ENCODE measurements at regions of chr16 and their contacts with region 1.

Region 1: GRCh38 chr16:11045846-11046245 is 101.5 kb downstream of the CLEC16A start:
- DNase-seq: no peak
- ATAC-seq: peak in 1 of 8 donors; percentile 37
- H3K4me3 ChIP-seq: no peak overlapping the region
- H3K27ac ChIP-seq: peak overlapping the region in 2 of 10 donors; percentile 46 to 48
- H3K4me1 ChIP-seq: peaks cover 0 to 11% (median 0%) of the 10 kb centered on the region in 9 donors
- H3K27me3 ChIP-seq: no peaks in the 10 kb centered on the region
- CTCF ChIP-seq: no peak

Region 2: GRCh38 chr16:11072420-11073153 is 26.7 kb after region 1 on chr16:
- intact Hi-C with region 1: loop called in 1 of 10 experiments (anchors 2 kb)
- DNase-seq: no peak
- ATAC-seq: no peak
- H3K4me3 ChIP-seq: no peak overlapping the region
- H3K27ac ChIP-seq: no peak overlapping the region
- H3K4me1 ChIP-seq: peaks cover 0 to 2% (median 0%) of the 10 kb centered on the region in 9 donors
- H3K27me3 ChIP-seq: no peaks in the 10 kb centered on the region
- CTCF ChIP-seq: no peak

Region 3: DNA sequence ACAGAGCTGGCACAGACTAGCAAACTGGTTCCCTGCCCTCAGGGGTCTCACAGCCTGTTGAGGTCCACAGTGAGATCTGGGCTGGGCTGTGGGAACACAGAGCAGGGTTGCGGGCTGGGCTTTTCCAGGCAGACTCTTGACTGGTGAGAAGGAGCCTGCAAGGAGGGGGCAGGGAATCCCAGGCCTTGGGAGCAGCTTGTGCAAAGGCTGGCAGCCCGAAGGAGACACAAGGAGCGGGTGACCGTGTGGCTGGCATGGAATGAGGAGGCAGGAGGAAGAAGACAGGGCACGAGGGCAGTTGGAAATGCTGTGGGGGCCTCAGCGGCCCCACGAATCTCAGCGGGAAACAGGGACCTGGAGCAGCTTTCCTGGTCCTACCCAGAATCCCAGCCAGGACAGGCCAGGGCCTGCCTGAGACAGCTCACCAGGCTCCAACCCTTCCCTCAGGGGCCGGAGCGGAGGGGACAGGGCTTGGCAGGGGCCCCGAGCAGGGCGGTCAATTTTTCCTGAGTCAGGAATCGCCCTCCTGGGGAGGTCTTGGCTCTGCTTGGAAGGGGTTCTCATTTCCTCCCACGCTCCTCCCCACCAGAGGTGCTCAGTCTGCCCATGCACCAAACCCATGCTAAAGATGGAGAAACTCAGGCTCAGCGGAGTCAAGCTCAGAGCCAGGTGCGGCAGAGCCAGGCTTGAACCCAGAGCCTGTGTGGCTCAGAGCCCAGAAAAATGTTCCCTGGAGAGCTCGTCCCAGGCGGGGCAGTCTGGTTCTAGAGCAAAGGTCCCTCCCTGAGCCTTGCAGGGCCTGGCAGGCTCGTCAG is 613.3 kb after region 1 on chr16:
- intact Hi-C with region 1: no loop called
- DNase-seq: peak in 1 of 2 donors; percentile 36
- ATAC-seq: peak; percentile 40 to 86 (median 70)
- H3K4me3 ChIP-seq: no peak overlapping the region
- H3K27ac ChIP-seq: peak overlapping the region in 3 of 10 donors; percentile 9 to 29 (median 19)
- H3K4me1 ChIP-seq: peaks cover 0 to 14% (median 5%) of the 10 kb centered on the region in 9 donors
- H3K27me3 ChIP-seq: no peaks in the 10 kb centered on the region
- CTCF ChIP-seq: no peak

Measured in heart right ventricle (tissue), 16 donors.